ENCODE measurements at regions of chr10 and their contacts with region 1.

Region 1: DNA sequence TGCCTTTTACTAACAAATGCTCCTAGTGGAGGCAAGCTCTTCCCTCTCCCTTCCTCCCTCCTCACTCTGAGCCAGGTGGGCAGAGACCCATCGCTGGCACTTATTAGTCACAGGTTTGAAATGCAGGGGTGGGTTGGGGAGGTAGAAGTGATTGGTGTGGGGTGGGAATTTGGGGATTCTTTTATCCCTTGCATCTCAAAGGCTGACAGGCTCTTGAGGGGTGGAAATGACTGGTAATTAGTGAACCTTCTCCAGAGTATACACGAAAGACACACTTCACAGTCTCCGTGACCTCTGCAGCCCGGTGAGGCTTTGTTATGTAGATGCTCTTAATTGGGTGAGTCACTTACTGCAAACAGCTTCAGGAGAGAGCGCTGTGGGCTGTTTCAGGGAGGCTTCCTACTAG is 13.9 kb upstream of the LRMDA start:
- DNase-seq: no peak
- ATAC-seq: no peak
- H3K4me3 ChIP-seq: no peak overlapping the region
- H3K27ac ChIP-seq: no peak overlapping the region
- H3K4me1 ChIP-seq: no peaks in the 10 kb centered on the region
- H3K27me3 ChIP-seq: no peaks in the 10 kb centered on the region
- CTCF ChIP-seq: no peak

Region 2: DNA sequence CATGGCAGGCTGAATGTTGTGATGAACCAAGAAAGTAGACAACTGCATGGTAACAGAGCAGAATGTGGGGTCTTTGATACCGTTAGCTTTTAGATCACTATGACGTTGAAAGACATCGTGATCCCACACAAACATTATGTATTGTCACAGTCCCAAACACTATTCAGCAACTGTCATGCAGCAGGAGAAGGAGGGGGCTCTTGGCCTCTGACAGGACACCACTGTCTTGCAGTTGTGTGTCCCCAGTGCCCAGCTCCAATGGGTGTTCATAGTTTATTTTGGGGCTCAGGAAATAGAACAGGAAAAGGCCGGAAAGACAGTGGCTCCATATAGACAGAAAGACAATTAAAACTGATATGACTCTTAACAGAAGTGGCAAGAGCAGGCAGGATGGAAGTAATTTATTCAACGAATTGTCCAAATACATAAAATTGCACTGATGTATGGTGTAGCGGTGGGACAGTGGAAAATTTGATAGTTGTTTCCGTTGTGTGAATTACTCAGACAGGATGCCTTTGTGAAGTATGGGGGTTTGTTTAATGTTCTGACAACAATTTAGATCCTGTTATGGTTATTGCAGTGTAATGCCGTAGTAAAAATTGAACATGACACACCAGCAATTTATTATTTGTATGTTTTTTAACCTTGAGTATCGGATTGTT is 305.9 kb after region 1 on chr10:
- intact Hi-C with region 1: loop called in 1 of 3 experiments (anchors 10 kb)
- DNase-seq: no peak
- ATAC-seq: no peak
- H3K4me3 ChIP-seq: no peak overlapping the region
- H3K27ac ChIP-seq: no peak overlapping the region
- H3K4me1 ChIP-seq: peaks cover 0 to 8% (median 7%) of the 10 kb centered on the region in 3 donors
- H3K27me3 ChIP-seq: no peaks in the 10 kb centered on the region
- CTCF ChIP-seq: no peak

Region 3: DNA sequence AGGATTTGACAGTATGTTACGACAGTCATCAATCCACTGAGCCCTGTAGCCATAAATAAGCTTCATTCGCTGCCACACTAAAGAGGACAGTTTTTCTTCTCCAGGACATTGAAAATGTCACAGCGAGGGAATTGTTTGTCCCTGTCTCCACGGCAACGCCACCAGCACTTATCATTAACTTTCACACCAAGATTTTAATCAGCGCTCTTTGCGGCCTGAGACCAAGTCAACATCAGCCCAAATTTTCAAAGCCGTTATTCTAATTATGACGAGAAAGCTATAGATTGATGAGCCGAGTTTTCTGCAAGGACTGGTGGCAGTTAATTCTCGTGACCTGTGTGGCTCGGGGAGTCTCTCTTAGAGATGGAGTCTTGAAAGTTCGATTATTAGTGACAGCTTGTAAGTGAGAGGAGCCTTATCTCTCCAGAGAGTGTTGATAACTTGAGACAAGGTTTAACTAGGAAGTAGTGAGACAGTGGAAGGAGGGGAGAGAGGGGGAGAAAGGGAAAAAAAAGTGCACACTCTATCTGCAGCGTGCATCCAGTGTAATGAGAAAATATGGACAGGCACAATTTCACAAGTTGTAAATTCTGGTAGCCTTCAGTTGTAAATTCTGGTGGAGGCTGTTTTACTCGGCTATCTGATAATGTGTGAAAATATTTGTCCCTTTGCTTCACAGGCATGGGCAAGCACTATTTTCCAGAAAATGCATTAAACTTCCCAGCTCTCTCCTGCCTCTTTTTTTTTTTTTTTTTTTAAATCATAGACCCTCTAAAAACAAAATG is 487.2 kb after region 1 on chr10:
- intact Hi-C with region 1: loop called in 1 of 3 experiments (anchors 10 kb)
- DNase-seq: peak in 2 of 6 donors; percentile 7 to 16
- ATAC-seq: peak in 3 of 4 donors; percentile 40 to 77 (median 56)
- H3K4me3 ChIP-seq: no peak overlapping the region
- H3K27ac ChIP-seq: no peak overlapping the region
- H3K4me1 ChIP-seq: peaks cover 0 to 2% (median 0%) of the 10 kb centered on the region in 3 donors
- H3K27me3 ChIP-seq: no peaks in the 10 kb centered on the region
- CTCF ChIP-seq: no peak

Measured in pancreas (tissue), 10 donors.